Right cardiac atrium (tissue), 5 donors: ENCODE measurements at regions of chr1 and their contacts with region 1.

Region 1: DNA sequence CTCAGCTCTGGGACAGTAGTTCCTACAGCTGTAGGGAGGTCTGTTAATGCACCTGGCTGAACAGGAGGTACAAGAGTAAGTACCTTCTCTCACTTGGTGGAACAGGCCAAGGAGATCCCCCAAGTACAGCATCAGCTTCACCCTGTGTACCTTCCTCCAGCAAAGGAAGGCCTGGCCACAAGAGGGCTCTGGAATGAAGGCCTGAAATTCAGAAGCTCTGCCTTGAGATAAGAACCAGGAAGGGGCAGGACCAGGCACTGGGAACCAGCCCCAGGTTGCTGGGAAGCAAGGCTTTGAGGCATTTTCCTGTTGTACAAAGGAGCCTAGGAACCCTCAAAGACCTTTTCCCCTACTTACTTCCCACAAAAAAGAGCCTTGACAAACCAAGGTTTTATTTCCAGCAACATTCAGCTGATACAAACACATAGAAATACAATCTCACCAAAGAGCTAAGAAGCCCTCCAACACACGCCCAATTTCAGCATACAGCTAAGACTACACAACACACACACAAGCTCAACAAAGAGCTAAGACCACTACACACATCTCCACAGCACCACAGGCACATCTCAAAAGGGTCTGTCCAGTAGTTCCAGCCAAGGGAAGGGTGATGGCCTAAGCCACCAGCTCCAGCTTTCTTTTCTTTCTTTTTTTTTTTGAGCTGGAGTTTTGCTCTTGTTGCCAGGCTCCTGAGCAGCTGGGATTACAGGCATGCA is 23.5 kb downstream of the F11R start:
- DNase-seq: peak; percentile 74 to 87 (median 83)
- ATAC-seq: peak; percentile 90
- H3K4me3 ChIP-seq: no peak overlapping the region
- H3K27ac ChIP-seq: peak overlapping the region; percentile 63
- H3K4me1 ChIP-seq: peaks cover 2% of the 10 kb centered on the region
- H3K27me3 ChIP-seq: no peaks in the 10 kb centered on the region

Region 2: GRCh38 chr1:160711602-160712311 is 285.7 kb before region 1 on chr1 and contains the start of gene CD48:
- intact Hi-C with region 1: no loop called
- DNase-seq: no peak
- ATAC-seq: no peak
- H3K4me3 ChIP-seq: no peak within 1 kb of the TSS
- H3K27ac ChIP-seq: no peak within 1 kb of the TSS
- H3K4me1 ChIP-seq: no peaks in the 10 kb centered on the region
- H3K27me3 ChIP-seq: no peaks in the 10 kb centered on the region
- total RNA-seq, gene CD48: 0.39 to 4.1 (median 1.8) TPM

Region 3: DNA sequence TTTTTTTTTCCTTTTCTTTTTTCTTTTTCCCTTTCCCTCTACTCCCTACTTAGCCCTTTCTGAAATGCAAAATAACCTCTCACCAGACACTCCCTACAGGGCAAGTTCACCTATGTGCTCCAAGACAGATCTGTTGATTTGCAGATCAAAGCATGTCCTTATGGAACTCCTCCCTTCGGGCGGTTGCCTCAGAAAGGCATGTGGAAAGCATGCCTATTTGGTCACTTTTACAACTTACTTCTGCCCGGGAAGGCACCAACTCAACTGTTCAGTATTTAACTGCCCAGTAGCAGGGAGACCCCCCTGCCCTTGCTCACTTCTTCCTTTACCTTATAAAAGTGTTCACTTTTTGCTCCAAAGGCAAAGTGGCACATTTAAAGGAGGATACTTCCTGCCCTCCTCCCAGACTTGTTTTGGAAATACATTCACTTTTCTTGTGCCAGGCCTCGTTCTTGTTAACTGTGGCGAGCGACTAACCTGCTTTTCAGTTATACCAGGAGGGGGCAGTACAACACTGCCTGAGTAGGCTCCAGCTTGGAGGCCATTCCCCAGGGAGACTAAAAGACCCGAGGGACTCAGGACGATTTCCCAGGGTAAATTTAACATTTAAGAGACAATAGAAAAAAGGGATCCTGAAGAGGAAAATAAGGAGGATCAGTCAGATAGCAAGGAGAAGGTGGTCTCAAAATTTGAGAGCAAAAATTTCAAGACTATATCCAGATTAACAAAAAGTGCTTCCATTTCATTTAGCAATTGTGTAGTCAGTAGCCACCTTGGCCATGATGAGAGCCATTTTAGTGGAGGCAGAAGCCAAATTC is 270.8 kb before region 1 on chr1:
- intact Hi-C with region 1: loop called in 1 of 4 experiments (anchors 5 kb)
- DNase-seq: peak in 2 of 3 donors; percentile 23 to 52
- ATAC-seq: peak; percentile 88 to 92
- H3K4me3 ChIP-seq: no peak overlapping the region
- H3K27ac ChIP-seq: no peak overlapping the region
- H3K4me1 ChIP-seq: no peaks in the 10 kb centered on the region
- H3K27me3 ChIP-seq: no peaks in the 10 kb centered on the region

Region 4: DNA sequence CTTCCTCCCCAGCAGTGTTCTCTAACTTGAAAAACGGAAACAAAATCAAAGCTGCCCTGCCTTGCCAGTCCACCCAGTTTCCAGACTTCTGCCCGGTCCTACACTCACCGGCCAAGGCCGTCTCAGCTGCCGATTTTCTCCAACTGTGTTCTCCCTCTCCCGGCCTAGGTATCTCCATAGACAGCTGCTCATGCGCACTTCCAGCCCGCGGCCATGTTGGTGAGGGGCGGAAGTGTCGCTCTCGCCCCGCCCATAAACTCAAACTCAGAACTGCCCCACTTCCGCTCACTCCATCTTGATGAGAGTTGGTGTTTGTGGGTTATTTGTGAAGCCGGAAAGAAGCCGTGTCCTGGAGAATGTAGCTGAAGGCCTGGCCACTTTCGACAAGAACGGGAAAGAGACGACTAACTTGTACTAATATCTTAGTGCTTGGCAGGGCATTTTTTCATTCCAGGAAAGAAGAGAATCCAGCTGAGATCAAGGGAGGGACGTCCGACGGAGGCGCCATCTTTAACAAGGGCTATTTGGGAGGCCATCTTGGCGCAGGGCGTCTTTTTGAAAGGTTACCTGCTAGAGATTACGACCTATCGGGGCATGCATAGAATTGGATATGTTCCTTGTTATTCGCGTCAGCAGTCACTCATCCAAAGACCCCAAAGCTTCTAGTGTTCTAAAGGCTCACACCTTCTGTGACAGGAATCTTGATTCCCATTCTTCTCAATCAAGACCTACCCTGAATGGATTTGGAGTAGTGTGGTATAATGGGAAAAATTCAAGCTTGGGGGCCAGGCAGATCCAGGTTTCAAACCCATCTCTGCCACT is 48.5 kb after region 1 on chr1 and contains the start of gene USF1:
- intact Hi-C with region 1: loop called in 2 of 4 experiments (anchors 10 kb)
- DNase-seq: peak; percentile 92 to 96 (median 96)
- ATAC-seq: peak; percentile 97 to 98
- H3K4me3 ChIP-seq: peak within 1 kb of the TSS; percentile 93
- H3K27ac ChIP-seq: peak within 1 kb of the TSS; percentile 93
- H3K4me1 ChIP-seq: peaks cover 3% of the 10 kb centered on the region
- H3K27me3 ChIP-seq: no peaks in the 10 kb centered on the region
- total RNA-seq, gene USF1: 34.5 to 41.4 (median 40.7) TPM

Region 5: DNA sequence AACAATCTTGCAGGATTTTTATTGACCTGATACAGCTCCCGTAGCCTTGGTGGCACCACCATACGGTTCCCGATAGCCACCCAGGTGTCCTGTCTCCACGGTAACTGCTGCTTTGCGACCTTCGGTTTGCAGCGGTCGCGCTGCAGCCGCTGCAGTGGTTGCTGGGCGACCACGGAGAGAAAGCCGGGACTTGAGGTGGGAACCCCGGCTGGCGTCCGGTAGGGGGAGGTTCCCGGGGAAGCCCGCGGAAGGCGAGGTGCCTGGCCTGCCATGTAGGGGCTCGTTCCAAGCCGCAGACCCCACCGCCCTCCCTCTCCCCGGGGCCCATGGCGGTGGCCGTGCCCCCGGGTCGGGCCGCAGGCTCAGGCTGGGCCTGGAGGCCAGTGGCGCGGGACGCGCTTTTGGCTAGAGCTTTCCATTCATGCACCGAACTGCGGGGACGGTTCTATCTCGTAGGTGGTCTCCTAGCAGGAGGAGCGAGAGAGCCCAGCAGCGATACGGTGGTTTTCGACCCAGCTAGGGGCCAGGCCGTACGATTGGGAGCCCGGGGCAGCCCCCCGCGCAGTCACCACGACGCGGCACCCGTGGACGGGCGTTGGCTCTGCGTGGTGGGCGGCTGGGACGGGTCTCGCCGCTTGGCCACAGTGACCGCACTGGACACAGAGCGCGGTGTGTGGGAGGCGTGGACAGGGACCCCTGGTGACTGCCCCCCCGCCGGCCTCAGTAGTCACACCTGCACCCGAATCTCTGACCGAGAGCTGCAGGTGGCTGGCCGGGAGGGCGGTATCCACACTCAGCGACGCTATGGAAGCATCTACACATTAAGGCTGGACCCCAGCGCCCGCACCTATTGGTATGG is 101.0 kb after region 1 on chr1 and contains the start of gene KLHDC9:
- intact Hi-C with region 1: loop called in 3 of 4 experiments (anchors 2 to 10 kb)
- DNase-seq: peak; percentile 73 to 89 (median 88)
- ATAC-seq: peak; percentile 78 to 81
- H3K4me3 ChIP-seq: peak within 1 kb of the TSS; percentile 38
- H3K27ac ChIP-seq: no peak within 1 kb of the TSS
- H3K4me1 ChIP-seq: peaks cover 5% of the 10 kb centered on the region
- H3K27me3 ChIP-seq: no peaks in the 10 kb centered on the region
- total RNA-seq, gene KLHDC9: 3.4 to 5.4 (median 4.4) TPM

Region 6: DNA sequence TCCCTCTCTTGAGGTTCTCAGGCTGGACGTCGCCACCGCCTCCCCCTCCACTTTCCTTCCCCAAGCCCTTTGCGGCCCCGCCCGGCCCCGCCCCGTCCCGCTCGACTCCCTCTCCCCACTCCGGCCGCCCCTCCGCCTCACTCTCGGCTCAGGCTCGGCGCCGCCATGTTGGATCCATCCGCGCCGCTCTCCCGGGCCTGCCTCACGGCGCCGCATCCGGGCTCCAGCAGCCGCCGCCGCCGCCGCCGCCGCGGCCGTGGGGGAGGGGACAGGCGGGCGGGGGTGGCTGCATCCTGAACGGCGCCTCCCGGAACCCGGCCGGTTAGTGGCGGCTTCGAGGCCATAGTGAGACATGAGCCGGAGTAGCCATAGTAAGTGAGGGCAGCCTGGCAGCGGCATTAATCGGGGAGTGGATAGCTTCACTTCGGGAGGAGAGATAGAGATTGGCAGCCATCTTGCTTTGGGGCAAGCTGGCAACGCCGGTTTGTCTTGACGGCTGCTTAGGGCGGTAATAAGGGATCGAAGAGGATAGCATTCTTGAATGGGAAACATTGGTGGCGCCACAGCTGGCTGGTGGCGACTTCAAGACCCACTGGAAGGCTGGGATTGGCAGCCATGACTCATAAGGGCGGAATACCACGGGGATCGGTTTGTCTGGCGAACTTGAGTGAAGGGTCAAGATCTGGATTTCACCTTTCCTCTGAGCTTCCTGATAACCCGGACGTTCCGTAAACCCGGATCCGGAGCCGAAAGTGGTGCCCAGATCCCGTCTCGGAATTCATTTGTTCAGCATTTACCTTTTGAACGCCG is 135.1 kb after region 1 on chr1 and contains the start of gene DEDD:
- intact Hi-C with region 1: loop called in 2 of 4 experiments (anchors 10 kb)
- DNase-seq: peak; percentile 95 to 98 (median 96)
- ATAC-seq: peak; percentile 95 to 96
- H3K4me3 ChIP-seq: peak within 1 kb of the TSS; percentile 86
- H3K27ac ChIP-seq: peak within 1 kb of the TSS; percentile 98
- H3K4me1 ChIP-seq: no peaks in the 10 kb centered on the region
- H3K27me3 ChIP-seq: no peaks in the 10 kb centered on the region
- total RNA-seq, gene DEDD: 26.3 to 30.6 (median 28.7) TPM